ENCODE measurements at regions of chr7 and their contacts with region 1.

Region 1: GRCh38 chr7:30800785-30801252 is 29.6 kb downstream of the MINDY4 start:
- DNase-seq: no peak
- ATAC-seq: peak; percentile 88
- H3K4me3 ChIP-seq: no peak overlapping the region
- H3K27ac ChIP-seq: no peak overlapping the region
- H3K4me1 ChIP-seq: peaks cover 39% of the 10 kb centered on the region
- H3K27me3 ChIP-seq: no peaks in the 10 kb centered on the region
- CTCF ChIP-seq: peak; percentile 71

Region 2: DNA sequence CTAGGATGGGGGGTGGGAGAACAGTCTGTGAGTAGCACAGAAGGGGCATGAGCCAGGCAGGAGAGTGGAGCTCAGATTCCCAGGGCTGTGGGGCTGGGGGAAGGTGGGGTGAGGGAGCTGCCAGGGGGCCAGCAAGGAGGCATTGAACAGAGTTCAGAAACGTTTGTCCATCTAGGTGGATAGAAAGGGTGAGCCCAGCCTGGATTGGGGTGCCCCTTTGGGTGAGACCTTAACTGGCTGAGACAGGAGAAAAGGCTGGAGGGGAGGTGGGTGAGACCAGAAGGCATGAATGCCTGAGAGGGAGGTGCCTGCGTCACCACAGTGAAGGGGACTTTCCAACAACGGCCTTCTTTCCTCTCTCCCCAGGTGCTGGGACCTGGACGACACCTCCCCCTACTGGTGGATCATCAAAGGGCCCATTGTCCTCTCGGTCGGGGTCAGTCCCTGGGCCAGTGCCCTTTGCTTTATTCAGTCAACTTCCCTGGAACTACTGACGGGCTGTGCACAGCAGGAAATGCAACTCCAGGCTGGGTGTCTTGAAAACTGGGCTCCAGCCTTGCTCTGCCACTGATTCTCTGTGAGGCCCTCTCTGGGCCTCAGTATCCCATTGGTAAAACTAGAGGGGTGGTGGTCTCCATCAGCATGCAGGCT is 173.9 kb after region 1 on chr7:
- intact Hi-C with region 1: loop called (anchors 10 kb)
- DNase-seq: peak; percentile 81
- ATAC-seq: peak; percentile 90
- H3K4me3 ChIP-seq: no peak overlapping the region
- H3K27ac ChIP-seq: no peak overlapping the region
- H3K4me1 ChIP-seq: no peaks in the 10 kb centered on the region
- H3K27me3 ChIP-seq: no peaks in the 10 kb centered on the region
- CTCF ChIP-seq: peak; percentile 76

Region 3: GRCh38 chr7:31122649-31123058 is 321.8 kb after region 1 on chr7:
- intact Hi-C with region 1: loop called (anchors 10 kb)
- DNase-seq: no peak
- ATAC-seq: peak; percentile 92
- H3K4me3 ChIP-seq: no peak overlapping the region
- H3K27ac ChIP-seq: no peak overlapping the region
- H3K4me1 ChIP-seq: peaks cover 3% of the 10 kb centered on the region
- H3K27me3 ChIP-seq: no peaks in the 10 kb centered on the region
- CTCF ChIP-seq: peak; percentile 78